Ascending aorta (tissue), 2 donors: ENCODE measurements at regions of chr21 and their contacts with region 1.

Region 1: DNA sequence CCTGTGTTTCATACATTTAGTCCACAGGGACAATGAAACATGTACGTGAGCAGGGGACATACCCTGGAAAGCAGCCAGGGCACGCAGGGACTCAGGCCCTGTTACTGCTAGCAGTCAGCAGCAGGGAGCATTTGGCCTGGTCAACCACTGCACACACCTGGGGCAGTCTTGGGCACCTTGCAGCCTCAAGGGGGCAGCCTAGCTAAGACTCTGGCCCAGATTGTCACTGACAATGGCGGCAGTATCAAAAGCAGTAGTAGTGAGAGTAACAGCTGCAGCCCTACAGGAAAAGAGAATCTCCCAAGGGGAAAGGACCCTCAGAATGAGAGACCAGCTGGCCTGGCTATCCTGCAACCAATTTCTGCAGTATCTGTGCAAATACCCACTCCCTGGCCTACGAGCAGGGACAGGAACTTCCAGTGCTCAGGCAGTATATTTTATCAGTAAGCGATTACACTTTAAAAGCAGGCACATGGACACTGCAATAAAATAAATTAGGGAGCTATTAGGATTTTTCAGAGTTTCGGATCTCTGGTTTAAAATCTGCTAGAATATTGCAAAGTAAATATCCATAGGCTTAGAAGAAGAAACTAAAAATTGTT is 475.6 kb downstream of the LTN1 start:
- DNase-seq: peak in 1 of 2 donors; percentile 70
- H3K4me3 ChIP-seq: no peak overlapping the region
- H3K27ac ChIP-seq: no peak overlapping the region
- H3K4me1 ChIP-seq: peaks cover 0 to 2% of the 10 kb centered on the region in 2 donors
- H3K27me3 ChIP-seq: no peaks in the 10 kb centered on the region
- CTCF ChIP-seq: peak in 2 of 3 experiments; percentile 18 to 48

Region 2: DNA sequence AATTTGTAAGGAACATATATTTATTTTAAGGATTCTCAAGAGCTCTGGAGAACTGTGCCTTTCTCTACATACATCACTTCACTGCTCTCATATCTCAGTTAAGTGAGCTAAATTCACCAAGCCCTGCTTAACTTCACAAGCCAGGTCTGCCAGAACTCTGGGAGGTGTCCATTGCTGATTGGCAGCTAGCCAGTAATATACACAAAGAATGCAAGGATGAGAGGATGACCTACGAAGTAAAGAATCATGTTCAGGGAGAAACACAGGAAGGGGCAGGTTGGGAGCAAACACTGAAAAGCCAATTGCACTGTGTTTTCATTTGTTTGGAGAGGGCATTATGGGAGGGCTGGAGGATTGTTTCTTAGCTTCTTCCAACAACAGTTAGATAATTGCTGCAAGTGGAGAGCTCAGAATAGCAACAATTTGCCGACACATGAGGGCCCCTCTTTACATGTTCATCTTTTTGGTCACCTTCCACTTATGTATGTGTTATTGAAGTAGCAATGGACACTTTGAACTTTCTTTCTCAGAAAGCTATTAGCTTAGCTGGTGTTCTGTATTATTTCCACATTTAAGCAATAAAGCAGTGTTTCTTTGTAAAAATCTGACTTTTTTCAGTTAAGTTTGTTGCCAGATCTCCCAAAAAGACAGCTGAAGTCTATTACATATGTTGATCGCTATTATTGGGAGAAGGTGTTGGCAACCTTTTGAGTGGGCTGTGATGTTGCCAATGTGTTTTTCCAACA is 220.8 kb after region 1 on chr21:
- intact Hi-C with region 1: loop called (anchors 5 kb)
- DNase-seq: no peak
- H3K4me3 ChIP-seq: no peak overlapping the region
- H3K27ac ChIP-seq: no peak overlapping the region
- H3K4me1 ChIP-seq: no peaks in the 10 kb centered on the region
- H3K27me3 ChIP-seq: no peaks in the 10 kb centered on the region
- CTCF ChIP-seq: no peak